ENCODE measurements at regions of chr17 and their contacts with region 1.

Region 1: DNA sequence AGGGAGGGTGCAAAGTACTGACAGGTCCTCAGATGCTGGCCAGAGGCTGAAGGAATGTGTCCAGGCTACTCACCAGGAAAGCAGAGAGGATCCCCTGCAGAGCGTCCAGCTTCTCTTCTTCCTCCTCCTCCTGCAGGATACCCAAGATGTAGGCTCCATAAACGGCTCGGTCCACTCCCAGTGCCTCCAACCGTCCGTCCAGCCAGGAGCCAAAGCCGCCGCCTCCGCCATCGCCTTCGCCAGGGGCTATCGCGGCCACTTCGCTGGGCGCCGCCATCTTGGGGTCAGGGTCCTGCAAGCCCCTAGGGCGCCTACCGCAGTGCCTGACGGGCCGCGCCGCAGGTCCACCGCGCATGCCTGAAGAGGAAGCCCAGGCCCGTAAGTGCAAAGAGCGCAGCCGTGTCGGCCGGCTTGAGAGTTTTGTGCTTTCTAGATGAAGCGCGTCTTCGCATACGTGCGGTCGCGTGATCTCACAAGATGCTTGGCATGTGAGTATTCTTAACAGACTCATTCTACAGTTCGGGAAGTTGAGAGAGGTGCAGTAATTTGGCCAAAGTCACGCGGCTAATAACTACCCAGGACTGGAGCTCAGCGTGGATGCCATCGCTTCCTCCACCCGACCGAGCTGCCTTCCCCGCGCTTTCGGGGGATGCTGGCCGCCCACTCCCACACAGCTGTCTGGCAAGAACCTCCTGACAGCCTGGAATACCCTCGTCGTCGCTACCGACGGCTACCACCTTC is at the start of gene CCDC43:
- DNase-seq: peak; percentile 95

Region 2: GRCh38 chr17:44642834-44643233 is 46.8 kb before region 1 on chr17:
- CTCF ChIA-PET with region 1: no interaction called
- POLR2A ChIA-PET with region 1: no interaction called
- DNase-seq: no peak

Region 3: DNA sequence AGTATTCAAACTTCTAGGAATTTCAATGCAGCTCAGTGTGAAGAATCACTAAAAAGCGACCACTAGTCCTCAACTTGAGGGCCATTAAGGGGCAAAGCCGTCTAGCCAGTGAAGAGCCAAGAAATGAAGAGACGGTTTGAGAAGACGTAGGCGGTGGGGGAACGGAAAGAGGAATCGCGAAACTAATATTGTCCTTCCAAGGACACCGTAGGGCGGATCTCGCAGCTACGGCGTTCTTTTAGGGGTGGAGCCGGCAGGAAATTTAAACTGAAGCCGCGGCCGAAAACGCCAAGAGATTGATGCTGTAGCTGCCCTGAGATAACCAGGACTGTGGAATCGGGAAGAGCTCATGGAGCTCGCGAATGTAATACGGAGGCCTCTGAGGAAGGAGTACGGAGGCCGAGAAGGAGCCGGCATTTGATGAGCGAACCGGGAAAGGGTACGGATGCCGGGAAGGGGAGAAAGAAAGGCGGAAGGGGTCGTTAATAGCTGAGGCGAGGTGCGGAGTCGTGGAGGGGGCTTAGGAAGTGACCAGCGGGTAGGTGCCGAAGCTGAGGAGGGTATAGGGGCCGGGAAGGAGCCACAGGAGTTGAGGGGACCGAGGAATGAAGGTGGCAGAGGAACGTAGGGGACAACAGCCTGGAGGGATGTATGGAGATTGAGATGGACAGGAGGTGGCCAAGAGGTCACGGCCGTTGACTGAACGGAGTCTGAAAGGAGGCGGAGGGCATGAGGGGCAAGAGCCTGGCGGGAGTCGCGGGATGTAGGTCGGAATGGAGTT is 18.9 kb after region 1 on chr17 and contains the start of gene DBF4B:
- CTCF ChIA-PET with region 1: interaction called, 4 read pairs
- POLR2A ChIA-PET with region 1: interaction called, 59 read pairs
- DNase-seq: peak; percentile 84

Region 4: GRCh38 chr17:44722254-44722653 is 32.6 kb after region 1 on chr17:
- CTCF ChIA-PET with region 1: no interaction called
- POLR2A ChIA-PET with region 1: no interaction called
- DNase-seq: no peak

Measured in HEK293T (cell line).